Naive thymus-derived CD4-positive, alpha-beta T cell (primary cell): ENCODE measurements at regions of chr10 and their contacts with region 1.

Region 1: DNA sequence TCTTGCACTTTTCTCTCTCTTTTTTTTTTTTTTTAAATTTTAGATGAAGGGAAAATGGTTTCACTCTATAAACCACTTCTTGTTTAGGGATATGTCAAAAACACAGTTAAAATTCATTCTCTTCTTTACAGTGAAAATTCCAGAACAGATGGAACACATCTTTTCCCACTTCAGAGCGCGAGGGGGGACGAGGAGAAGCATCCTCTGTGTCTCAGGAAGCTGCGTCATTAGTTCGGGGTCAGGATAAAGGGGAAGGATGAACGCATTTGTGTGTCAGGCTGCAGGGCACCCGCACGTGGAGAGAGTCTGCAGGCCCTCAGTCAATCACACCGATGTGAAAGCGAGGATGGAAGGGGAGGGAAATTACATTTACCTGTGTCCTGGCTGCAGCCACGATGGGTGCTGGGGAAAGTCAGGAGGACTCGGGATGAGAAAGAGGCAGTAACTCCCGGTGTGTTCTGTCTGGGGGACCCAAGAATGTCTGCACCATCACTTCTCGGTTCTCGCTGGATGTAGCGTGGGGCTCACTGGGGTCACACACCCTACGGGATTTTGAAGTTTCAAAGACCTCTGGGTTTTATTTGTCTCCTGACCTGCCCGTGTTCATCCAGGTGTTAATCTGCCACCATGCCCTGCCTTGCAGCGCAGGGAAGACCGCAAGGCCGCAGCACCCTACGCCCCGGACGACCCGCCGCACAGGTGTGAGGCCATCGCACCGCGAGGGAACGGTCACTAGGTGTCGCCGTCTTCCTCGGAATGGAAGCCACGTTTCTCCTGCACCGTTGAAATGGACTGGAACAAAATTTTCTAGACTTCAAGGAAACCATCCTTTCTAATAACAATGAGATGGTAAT is 66.7 kb upstream of the PITRM1 start:
- DNase-seq: peak; percentile 23 to 72 (median 53)
- ATAC-seq: peak; percentile 78
- H3K4me3 ChIP-seq: no peak overlapping the region
- H3K4me3 Mint-ChIP-seq: peak overlapping the region in 2 of 10 donors; percentile 24 to 32
- H3K27ac ChIP-seq: no peak overlapping the region
- H3K27ac Mint-ChIP-seq: no peak overlapping the region
- H3K4me1 ChIP-seq: no peaks in the 10 kb centered on the region
- H3K4me1 Mint-ChIP-seq: peaks cover 0 to 8% (median 4%) of the 10 kb centered on the region in 7 donors
- H3K27me3 ChIP-seq: no peaks in the 10 kb centered on the region
- H3K27me3 Mint-ChIP-seq: peaks cover 0 to 33% (median 10%) of the 10 kb centered on the region in 5 donors

Region 2: DNA sequence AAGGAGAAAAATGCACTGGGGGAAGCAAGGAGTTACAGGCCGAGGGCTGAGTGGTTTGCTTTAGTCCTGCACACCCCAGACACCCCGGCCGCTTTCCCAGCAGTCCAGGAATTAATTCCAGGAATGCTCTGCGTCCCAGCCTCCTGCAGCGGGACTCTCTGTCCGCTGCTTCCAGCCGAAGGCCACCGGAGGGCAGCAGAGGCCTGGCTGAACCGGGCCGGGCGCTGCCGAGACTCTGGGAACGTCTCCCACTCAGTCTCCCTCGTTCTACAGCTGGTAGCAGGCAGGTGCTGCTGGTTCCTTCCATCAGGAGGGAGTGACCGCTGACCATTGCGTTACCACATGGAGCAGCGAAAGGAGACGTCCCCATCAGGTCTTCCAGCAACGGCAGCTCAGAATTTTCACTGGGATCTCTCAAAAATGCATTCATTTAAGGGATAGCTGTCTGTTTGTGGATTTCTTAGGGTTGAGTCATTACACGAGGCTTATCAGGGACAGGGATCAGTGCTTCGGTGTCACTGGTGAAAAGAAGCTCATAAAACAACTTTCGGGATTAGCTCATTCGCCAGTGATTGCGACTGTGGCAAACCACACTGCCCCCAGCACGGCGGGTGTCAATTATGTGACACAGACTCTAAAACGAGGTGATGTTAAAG is 41.8 kb before region 1 on chr10:
- CTCF ChIA-PET with region 1: no interaction called
- POLR2A ChIA-PET with region 1: no interaction called
- intact Hi-C with region 1: loop called in 1 of 2 experiments (anchors 5 kb)
- DNase-seq: peak in 5 of 9 donors; percentile 25 to 82 (median 29)
- ATAC-seq: peak; percentile 72
- H3K4me3 ChIP-seq: peak overlapping the region; percentile 46
- H3K4me3 Mint-ChIP-seq: peak overlapping the region; percentile 56 to 76 (median 72)
- H3K27ac ChIP-seq: no peak overlapping the region
- H3K27ac Mint-ChIP-seq: peak overlapping the region in 1 of 9 donors; percentile 70
- H3K4me1 ChIP-seq: peaks cover 3 to 23% of the 10 kb centered on the region in 2 donors
- H3K4me1 Mint-ChIP-seq: peaks cover 0 to 16% (median 8%) of the 10 kb centered on the region in 7 donors
- H3K27me3 ChIP-seq: no peaks in the 10 kb centered on the region
- H3K27me3 Mint-ChIP-seq: peaks cover 22 to 88% (median 39%) of the 10 kb centered on the region in 5 donors

Region 3: GRCh38 chr10:3452173-3452626 is 212.9 kb after region 1 on chr10:
- CTCF ChIA-PET with region 1: interaction called, 3 read pairs
- POLR2A ChIA-PET with region 1: no interaction called
- intact Hi-C with region 1: loop called in 1 of 2 experiments (anchors 1 kb)
- DNase-seq: peak in 6 of 9 donors; percentile 18 to 56 (median 24)
- ATAC-seq: no peak
- H3K4me3 ChIP-seq: no peak overlapping the region
- H3K4me3 Mint-ChIP-seq: peak overlapping the region in 1 of 10 donors; percentile 57
- H3K27ac ChIP-seq: peak overlapping the region; percentile 51
- H3K27ac Mint-ChIP-seq: peak overlapping the region in 8 of 9 donors; percentile 16 to 88 (median 78)
- H3K4me1 ChIP-seq: peaks cover 0 to 38% of the 10 kb centered on the region in 2 donors
- H3K4me1 Mint-ChIP-seq: peaks cover 7 to 48% (median 36%) of the 10 kb centered on the region in 7 donors
- H3K27me3 ChIP-seq: peaks cover 0 to 6% of the 10 kb centered on the region in 2 donors
- H3K27me3 Mint-ChIP-seq: peaks cover 0 to 32% (median 0%) of the 10 kb centered on the region in 5 donors

Region 4: DNA sequence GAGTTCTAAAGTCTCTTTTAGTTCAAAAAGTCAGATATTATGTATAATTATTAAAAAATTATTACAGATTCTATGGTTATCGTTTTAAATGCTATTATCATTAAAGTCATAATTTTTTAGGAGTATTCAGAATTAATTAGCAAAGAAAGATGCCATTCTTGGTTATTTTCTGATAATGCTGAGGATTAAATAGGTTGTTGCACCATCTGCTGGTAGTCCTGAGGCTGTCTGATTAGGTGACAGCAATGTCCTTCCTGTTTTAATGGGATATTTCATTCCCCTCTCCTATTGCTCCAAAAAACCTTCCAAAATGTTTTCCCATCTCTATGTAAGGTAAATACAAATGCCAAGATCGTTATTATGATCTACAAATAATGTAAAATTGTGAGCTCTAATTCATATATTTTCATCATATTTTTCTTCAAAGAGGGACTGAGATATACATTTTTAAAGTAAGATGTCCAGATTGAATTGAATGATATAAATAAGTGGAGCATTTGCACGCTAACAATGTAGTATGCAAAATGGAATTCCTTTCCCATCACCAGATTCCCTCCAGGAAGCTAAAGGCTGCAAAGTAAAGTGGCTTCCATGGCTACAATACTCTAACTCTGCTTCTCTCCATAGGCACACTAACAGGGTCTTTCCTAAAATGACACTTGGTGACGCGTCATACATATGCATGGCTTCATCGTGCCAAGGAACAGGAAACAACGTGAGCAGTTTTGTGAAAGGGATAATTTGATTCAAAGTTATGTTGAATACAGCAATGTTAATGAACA is 1527.9 kb after region 1 on chr10:
- CTCF ChIA-PET with region 1: no interaction called
- POLR2A ChIA-PET with region 1: no interaction called
- intact Hi-C with region 1: loop called in 1 of 2 experiments (anchors 2 kb)
- DNase-seq: peak in 2 of 9 donors; percentile 0 to 14
- ATAC-seq: no peak
- H3K4me3 ChIP-seq: no peak overlapping the region
- H3K4me3 Mint-ChIP-seq: no peak overlapping the region
- H3K27ac ChIP-seq: no peak overlapping the region
- H3K27ac Mint-ChIP-seq: no peak overlapping the region
- H3K4me1 ChIP-seq: no peaks in the 10 kb centered on the region
- H3K4me1 Mint-ChIP-seq: no peaks in the 10 kb centered on the region
- H3K27me3 ChIP-seq: peaks cover 0 to 3% of the 10 kb centered on the region in 2 donors
- H3K27me3 Mint-ChIP-seq: peaks cover 17 to 43% (median 32%) of the 10 kb centered on the region in 5 donors